ENCODE measurements at regions of chr10 and their contacts with region 1.

Region 1: DNA sequence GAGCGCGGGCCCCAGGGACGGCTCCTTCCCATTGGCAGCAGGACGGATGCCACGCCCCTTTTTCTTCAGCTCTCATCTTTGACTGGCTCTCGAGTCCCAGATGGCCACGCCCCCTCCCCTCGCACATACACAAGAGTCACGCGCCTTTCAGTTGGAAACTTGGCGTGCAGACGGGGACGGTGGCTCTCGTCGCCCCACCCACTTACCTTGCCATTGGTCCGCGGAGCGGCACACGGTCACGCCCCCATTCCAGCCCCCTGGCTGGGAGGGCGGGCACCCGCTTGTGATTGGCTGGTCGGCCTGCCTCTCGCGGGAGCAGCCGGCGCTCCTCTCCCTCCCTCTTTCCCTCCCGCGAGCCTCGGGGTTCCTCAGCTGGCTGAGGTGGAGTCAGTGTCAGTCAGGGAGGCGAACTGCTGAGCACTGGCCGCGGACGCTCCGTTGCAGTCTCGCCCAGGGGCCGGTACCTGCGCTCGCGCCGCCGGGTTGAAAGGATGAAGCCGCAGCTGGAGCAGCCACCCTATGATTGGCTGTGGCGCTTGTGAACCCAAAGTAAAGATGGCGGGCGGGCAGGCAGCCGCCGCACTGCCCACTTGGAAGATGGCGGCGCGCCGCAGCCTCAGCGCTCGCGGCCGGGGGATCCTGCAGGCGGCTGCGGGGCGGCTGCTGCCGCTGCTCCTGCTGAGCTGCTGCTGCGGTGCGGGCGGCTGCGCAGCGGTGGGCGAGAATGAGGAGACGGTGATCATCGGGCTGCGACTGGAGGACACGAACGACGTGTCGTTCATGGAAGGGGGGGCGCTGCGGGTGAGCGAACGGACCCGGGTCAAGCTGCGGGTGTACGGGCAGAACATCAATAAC is at the start of gene CNNM2:
- ATAC-seq: peak; percentile 82 to 94 (median 90)
- H3K4me3 ChIP-seq: peak within 1 kb of the TSS; percentile 79 to 97 (median 89)
- H3K27ac ChIP-seq: peak within 1 kb of the TSS; percentile 85 to 88
- H3K4me1 ChIP-seq: peaks cover 3 to 15% of the 10 kb centered on the region in 2 donors
- total RNA-seq, gene CNNM2: 4.4 to 11.4 (median 6.2) TPM

Region 2: GRCh38 chr10:102743588-102744373 is 174.4 kb before region 1 on chr10 and contains the start of gene WBP1L:
- in situ Hi-C with region 1: loop called in 3 of 9 experiments (anchors 25 kb)
- ATAC-seq: peak; percentile 93 to 98 (median 96)
- H3K4me3 ChIP-seq: peak within 1 kb of the TSS; percentile 69 to 79 (median 69)
- H3K27ac ChIP-seq: peak within 1 kb of the TSS; percentile 18 to 46
- H3K4me1 ChIP-seq: peaks cover 0 to 8% of the 10 kb centered on the region in 2 donors
- total RNA-seq, gene WBP1L: 21.1 to 49.7 (median 26.7) TPM

Region 3: DNA sequence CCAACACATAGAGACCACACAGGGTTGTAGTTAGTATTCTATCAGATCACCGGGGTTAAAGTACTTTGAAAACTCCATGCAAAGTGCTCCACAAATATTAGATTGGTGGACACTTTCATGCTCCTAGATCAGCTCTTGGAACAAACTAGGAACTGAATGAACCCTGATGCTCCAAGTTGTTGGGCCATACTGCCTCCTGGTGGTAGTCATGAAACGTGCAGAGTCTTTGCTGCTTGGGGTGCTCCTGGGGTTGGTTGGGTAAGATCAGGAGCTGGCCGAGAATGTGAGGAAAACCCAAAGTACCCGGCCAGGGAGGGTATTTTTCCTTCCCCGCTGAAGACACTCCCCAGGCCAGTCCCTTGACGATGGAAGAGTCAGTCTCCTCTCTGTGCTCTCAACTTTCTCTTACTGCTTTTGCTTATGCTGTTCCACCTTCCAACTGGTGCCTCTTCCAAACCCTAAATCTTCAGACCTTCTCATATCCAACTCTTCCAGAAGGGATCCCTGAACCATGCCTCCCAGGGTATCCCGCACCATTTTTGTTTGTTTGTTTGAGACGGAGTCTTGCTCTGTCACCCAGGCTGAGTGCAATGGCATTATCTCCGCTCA is 326.6 kb after region 1 on chr10:
- in situ Hi-C with region 1: loop called in 2 of 9 experiments (anchors 10 to 25 kb)
- ATAC-seq: peak in 7 of 8 experiments; percentile 50 to 94 (median 66)
- H3K4me3 ChIP-seq: no peak overlapping the region
- H3K27ac ChIP-seq: no peak overlapping the region
- H3K4me1 ChIP-seq: peaks cover 0 to 5% of the 10 kb centered on the region in 2 donors

Region 4: DNA sequence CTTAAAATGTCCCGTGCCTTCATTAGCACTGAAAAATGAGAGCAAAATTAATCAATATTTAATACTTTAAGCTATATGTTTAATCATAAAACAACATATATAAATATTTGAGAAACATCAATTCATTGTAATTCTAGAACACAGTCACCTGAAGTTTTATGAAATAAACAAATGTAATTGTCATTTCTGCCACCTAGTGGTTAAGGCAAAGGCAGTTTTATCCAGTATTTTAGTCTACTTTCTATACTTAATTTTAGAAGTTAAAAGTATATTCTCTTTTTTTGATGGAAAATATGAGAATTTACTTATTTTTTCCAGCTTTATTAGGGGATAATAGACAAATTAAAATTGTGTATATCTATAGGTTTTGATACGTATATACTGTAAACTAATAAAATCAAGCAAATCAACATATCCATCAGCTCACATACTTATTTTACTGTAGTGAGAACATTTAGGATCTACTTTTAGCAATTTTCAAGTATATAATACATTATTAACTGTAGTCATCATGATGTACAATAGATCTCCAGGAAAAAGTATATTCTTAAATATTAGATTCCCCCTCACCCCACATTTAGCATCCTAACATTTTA is 415.8 kb after region 1 on chr10:
- in situ Hi-C with region 1: loop called in 2 of 9 experiments (anchors 25 kb)
- ATAC-seq: no peak
- H3K4me3 ChIP-seq: no peak overlapping the region
- H3K27ac ChIP-seq: no peak overlapping the region
- H3K4me1 ChIP-seq: no peaks in the 10 kb centered on the region